ENCODE measurements at regions of chr11 and their contacts with region 1.

Region 1: DNA sequence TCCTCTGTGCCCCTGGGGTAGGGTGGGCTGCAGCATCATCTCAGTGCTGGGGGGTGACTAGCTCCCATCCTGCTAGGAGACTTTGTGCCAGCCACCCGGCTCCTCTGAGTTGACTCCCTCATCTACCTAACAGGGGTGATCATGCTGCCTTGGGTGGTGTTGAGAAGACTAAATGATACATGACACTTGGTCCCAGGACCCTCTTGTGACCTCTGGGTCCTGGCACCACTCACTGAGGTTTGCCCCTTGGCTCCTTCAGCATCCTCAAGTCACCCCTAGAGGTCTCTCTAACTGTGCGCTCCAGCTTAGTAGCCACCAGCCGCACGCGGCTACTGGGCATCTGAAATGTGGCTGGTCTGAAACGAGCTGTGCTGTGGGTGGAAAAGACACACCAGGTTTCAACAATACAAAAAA is 72.1 kb downstream of the LRRC32 start:
- DNase-seq: no peak
- ATAC-seq: peak; percentile 92
- H3K4me3 Mint-ChIP-seq: peak overlapping the region; percentile 1
- H3K27ac Mint-ChIP-seq: no peak overlapping the region
- H3K4me1 Mint-ChIP-seq: peaks cover 16% of the 10 kb centered on the region
- H3K27me3 Mint-ChIP-seq: peaks cover 19% of the 10 kb centered on the region
- CTCF ChIP-seq: no peak

Region 2: GRCh38 chr11:76610871-76611475 is 12.5 kb after region 1 on chr11:
- CTCF ChIA-PET with region 1: interaction called, 7 read pairs
- POLR2A ChIA-PET with region 1: no interaction called
- intact Hi-C with region 1: loop called (anchors 1 kb)
- DNase-seq: no peak
- ATAC-seq: no peak
- H3K4me3 Mint-ChIP-seq: no peak overlapping the region
- H3K27ac Mint-ChIP-seq: no peak overlapping the region
- H3K4me1 Mint-ChIP-seq: peaks cover 32% of the 10 kb centered on the region
- H3K27me3 Mint-ChIP-seq: peaks cover 27% of the 10 kb centered on the region
- CTCF ChIP-seq: no peak

Region 3: GRCh38 chr11:76744186-76745043 is 146.0 kb after region 1 on chr11:
- CTCF ChIA-PET with region 1: no interaction called
- POLR2A ChIA-PET with region 1: no interaction called
- intact Hi-C with region 1: no loop called
- DNase-seq: no peak
- ATAC-seq: no peak
- H3K4me3 Mint-ChIP-seq: no peak overlapping the region
- H3K27ac Mint-ChIP-seq: no peak overlapping the region
- H3K4me1 Mint-ChIP-seq: no peaks in the 10 kb centered on the region
- H3K27me3 Mint-ChIP-seq: peaks cover 10% of the 10 kb centered on the region
- CTCF ChIP-seq: no peak

Region 4: DNA sequence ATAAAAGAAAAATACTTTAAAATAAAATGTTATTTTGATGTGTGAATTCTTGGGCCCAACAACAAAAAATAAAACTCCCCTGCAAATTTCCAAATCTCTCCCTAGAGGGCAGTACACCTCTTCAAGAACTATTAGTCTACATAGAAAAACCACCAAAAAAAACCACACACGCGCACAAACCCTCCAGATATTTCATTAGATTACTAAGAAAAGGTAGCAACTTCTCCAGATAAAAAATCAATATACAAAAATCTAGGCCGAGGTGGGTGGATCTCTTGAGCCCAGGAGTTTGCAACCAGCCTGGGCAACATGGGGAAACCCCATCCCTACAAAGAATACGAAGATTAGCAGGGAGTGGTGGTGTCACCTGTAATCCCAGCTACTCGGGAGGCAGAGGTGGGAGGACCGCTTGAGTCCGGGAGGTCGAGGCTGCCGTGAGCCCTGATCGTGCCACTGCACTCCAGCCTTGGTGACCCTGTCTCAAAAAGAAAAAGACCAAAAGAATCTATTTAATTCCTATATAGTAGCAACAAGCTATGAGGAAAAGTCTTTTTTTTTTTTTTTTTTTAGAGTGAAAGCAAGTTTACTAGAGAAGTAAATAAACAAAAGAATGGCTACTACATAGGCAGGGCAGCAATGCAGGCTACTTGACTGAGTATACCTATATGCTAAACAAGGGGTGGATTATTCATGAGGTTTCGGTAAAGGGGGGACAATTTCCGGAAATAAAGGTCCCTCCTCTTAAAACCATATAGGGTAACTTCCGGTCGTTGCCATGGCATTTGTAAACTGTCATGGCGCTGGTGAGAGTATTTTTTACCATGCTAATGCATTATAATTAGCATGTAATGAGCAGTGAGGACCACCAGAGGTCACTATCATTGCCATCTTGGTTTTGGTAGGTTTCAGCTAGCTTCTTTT is 448.8 kb after region 1 on chr11:
- CTCF ChIA-PET with region 1: no interaction called
- POLR2A ChIA-PET with region 1: no interaction called
- intact Hi-C with region 1: no loop called
- DNase-seq: no peak
- ATAC-seq: peak; percentile 91
- H3K4me3 Mint-ChIP-seq: peak overlapping the region; percentile 71
- H3K27ac Mint-ChIP-seq: peak overlapping the region; percentile 64
- H3K4me1 Mint-ChIP-seq: peaks cover 12% of the 10 kb centered on the region
- H3K27me3 Mint-ChIP-seq: peaks cover 22% of the 10 kb centered on the region
- CTCF ChIP-seq: no peak

Measured in activated B cell treated with CpG ODN at 0.5 μM for 24 hours (primary cell).